ENCODE measurements at regions of chr1 and their contacts with region 1.

Region 1: DNA sequence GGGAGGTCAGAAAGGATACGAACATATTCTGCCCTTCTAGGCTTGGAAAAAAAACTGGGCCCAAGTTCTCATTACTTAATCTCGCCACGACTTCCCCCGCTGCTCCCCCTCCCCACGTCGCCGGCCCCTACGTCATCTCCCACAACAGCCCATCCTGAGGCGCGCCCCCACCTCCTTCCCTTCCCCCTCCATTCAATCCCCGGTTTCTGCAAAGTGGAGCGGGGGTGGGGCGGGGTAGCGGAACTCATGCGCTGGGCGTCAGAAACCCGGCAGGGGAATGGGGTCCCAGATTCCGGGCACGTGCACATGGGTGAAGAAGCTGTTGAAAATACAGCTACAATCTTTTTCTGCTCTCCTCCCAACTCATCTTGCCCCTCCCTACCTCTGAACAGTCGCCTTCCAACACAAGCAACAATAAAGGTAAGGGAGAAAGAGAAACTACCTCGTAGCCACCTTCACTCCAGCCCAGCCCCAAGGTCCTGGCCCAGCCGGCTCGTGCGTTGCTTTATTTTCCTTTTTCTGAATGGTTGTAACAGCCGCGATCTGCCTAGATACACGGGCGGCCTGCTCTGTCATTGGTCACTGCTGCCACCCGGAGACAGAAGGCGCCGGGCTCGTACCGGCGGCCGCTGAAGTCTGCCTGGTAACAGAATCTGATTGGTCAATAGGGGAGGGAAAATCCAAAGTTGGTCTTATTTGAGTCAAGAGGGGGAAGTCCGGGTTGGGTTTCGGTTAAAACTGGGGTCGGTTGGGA is at the start of gene RFX5:
- DNase-seq: peak; percentile 95
- H3K4me3 Mint-ChIP-seq: peak within 1 kb of the TSS; percentile 95
- H3K27ac Mint-ChIP-seq: peak within 1 kb of the TSS; percentile 99
- H3K4me1 Mint-ChIP-seq: peaks cover 45% of the 10 kb centered on the region
- H3K27me3 Mint-ChIP-seq: no peaks in the 10 kb centered on the region
- total RNA-seq, gene RFX5: 78.1 and 83.4 TPM in 2 replicates

Region 2: DNA sequence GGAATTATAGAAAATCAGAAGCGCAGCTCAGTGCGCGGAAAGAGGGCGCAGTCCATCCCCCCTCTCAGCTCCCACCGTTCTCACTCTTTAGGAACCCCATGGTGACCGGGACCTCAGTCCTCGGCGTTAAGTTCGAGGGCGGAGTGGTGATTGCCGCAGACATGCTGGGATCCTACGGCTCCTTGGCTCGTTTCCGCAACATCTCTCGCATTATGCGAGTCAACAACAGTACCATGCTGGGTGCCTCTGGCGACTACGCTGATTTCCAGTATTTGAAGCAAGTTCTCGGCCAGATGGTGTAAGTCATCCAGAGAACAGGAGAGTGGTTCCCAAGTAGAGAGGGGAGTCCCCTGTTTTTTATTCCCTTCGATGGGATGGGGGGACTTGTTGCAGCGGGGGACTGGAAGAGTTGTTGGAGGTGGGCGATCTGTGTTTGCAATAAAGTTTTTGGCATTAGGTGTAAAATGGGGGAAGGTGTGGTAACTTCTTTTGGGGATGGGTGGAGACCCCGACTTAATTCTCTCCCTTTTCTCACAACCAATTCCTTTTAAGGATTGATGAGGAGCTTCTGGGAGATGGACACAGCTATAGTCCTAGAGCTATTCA is 53.0 kb after region 1 on chr1:
- intact Hi-C with region 1: loop called (anchors 1 kb)
- DNase-seq: no peak
- H3K4me3 Mint-ChIP-seq: peak overlapping the region; percentile 92
- H3K27ac Mint-ChIP-seq: peak overlapping the region; percentile 99
- H3K4me1 Mint-ChIP-seq: peaks cover 27% of the 10 kb centered on the region
- H3K27me3 Mint-ChIP-seq: peaks cover 3% of the 10 kb centered on the region